ENCODE measurements at regions of chr17 and their contacts with region 1.

Region 1: GRCh38 chr17:41864836-41865595 is at the start of gene KLHL11:
- DNase-seq: peak; percentile 74 to 86
- ATAC-seq: peak; percentile 94 to 95
- H3K4me3 ChIP-seq: peak within 1 kb of the TSS; percentile 98 to 100 (median 99)
- H3K27ac ChIP-seq: peak within 1 kb of the TSS; percentile 92 to 97 (median 94)
- H3K4me1 ChIP-seq: peaks cover 20 to 35% of the 10 kb centered on the region in 2 donors
- H3K27me3 ChIP-seq: no peaks in the 10 kb centered on the region
- CTCF ChIP-seq: no peak
- POLR2A ChIP-seq: peak; percentile 88 to 90
- total RNA-seq, gene KLHL11: 2.2 to 4.7 (median 3.8) TPM

Region 2: GRCh38 chr17:41738077-41738735 is 126.8 kb before region 1 on chr17:
- in situ Hi-C with region 1: no loop called
- intact Hi-C with region 1: loop called (anchors 5 kb)
- DNase-seq: peak; percentile 55 to 71
- ATAC-seq: peak; percentile 73 to 93
- H3K4me3 ChIP-seq: no peak overlapping the region
- H3K27ac ChIP-seq: no peak overlapping the region
- H3K4me1 ChIP-seq: peaks cover 16 to 21% of the 10 kb centered on the region in 2 donors
- H3K27me3 ChIP-seq: peaks cover 43 to 44% (median 44%) of the 10 kb centered on the region in 3 donors
- CTCF ChIP-seq: peak; percentile 96 to 99 (median 98)
- POLR2A ChIP-seq: no peak

Region 3: DNA sequence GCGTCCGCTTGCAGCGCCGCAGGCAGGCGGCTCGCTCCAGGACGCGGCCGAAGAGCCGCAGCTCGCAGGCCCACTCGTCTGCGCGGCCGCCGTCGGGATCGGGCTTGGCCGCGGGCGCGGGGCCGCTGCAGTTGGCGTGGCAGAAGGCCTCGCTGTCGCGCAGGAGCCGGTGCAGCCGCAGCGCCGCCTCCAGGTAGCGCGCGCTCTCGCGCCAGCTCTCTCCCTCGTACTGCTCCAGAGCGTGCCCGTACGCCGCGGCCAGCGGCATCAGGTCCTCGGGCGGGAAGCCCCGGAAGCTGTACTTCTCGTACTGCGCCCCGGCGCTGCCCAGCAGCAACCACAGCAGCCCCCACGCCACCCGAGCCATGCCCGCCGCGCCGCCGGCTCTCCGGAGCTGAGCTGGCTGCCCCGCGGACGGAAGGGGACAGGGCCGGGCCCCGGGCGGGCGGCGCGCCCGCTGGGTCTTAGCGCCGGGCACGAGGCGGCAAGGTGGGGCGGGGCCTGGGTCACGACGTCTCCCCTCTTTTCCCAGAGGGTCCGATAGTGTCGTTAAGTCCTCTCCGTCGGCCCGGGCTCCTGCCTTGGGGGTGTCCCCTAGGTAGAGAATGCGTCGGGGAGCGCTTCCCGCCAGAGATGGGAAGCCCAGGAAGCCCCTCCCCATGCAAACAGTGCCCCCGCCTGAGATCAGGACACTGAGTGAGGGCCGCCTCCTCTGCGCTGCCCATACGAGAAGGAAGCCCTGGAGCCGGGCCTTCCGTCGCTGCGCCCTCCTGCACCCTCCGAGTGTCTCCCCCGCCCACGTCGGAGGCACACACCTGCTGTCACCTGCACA is 53.3 kb before region 1 on chr17 and contains the start of gene P3H4:
- in situ Hi-C with region 1: no loop called
- intact Hi-C with region 1: loop called (anchors 2 kb)
- DNase-seq: peak; percentile 42 to 66
- ATAC-seq: peak; percentile 79 to 89
- H3K4me3 ChIP-seq: peak within 1 kb of the TSS; percentile 56 to 88 (median 72)
- H3K27ac ChIP-seq: peak within 1 kb of the TSS; percentile 51 to 63 (median 58)
- H3K4me1 ChIP-seq: peaks cover 4 to 8% of the 10 kb centered on the region in 2 donors
- H3K27me3 ChIP-seq: no peaks in the 10 kb centered on the region
- CTCF ChIP-seq: peak; percentile 35 to 80 (median 68)
- POLR2A ChIP-seq: no peak
- total RNA-seq, gene P3H4: 1.8 to 4.0 (median 2.9) TPM

Region 4: GRCh38 chr17:41835800-41836549 is 29.0 kb before region 1 on chr17 and contains the start of gene NT5C3B:
- in situ Hi-C with region 1: no loop called
- intact Hi-C with region 1: loop called (anchors 2 kb)
- DNase-seq: peak in 1 of 2 donors; percentile 37
- ATAC-seq: peak; percentile 84 to 86
- H3K4me3 ChIP-seq: peak within 1 kb of the TSS; percentile 81 to 94 (median 90)
- H3K27ac ChIP-seq: peak within 1 kb of the TSS; percentile 68 to 81 (median 70)
- H3K4me1 ChIP-seq: peaks cover 0 to 10% of the 10 kb centered on the region in 2 donors
- H3K27me3 ChIP-seq: no peaks in the 10 kb centered on the region
- CTCF ChIP-seq: no peak
- POLR2A ChIP-seq: peak in 1 of 2 donors; percentile 35
- total RNA-seq, gene NT5C3B: 13.8 to 27.6 (median 23.1) TPM

Region 5: DNA sequence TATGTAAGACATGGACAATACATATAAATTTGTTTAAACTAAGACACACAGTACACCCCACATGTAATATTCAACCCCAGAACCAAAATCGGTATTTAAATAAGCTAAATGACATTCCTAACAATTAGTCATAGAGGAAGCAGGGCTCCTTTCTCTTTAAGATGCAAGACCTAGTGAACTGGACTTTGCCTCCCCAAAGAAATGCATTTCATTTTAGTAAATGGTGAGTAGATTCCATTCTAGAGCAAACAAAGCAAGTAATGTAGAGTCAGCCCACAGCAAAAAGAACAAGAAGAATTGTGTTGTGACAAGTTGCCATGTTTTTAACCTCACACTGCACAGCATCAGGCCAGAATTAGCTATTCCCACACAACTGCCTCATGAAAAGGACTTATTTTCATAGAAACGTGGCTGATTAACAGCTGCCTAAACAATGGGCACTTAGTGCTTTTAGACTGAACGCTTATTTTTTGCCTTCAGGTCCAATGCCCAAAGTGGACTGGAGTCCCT is 137.8 kb after region 1 on chr17:
- in situ Hi-C with region 1: no loop called
- intact Hi-C with region 1: no loop called
- DNase-seq: no peak
- ATAC-seq: no peak
- H3K4me3 ChIP-seq: no peak overlapping the region
- H3K27ac ChIP-seq: no peak overlapping the region
- H3K4me1 ChIP-seq: peaks cover 26 to 29% of the 10 kb centered on the region in 2 donors
- H3K27me3 ChIP-seq: no peaks in the 10 kb centered on the region
- CTCF ChIP-seq: no peak
- POLR2A ChIP-seq: no peak

Measured in gastrocnemius medialis (tissue), 4 donors.